ENCODE measurements at regions of chr5 and their contacts with region 1.

Region 1: DNA sequence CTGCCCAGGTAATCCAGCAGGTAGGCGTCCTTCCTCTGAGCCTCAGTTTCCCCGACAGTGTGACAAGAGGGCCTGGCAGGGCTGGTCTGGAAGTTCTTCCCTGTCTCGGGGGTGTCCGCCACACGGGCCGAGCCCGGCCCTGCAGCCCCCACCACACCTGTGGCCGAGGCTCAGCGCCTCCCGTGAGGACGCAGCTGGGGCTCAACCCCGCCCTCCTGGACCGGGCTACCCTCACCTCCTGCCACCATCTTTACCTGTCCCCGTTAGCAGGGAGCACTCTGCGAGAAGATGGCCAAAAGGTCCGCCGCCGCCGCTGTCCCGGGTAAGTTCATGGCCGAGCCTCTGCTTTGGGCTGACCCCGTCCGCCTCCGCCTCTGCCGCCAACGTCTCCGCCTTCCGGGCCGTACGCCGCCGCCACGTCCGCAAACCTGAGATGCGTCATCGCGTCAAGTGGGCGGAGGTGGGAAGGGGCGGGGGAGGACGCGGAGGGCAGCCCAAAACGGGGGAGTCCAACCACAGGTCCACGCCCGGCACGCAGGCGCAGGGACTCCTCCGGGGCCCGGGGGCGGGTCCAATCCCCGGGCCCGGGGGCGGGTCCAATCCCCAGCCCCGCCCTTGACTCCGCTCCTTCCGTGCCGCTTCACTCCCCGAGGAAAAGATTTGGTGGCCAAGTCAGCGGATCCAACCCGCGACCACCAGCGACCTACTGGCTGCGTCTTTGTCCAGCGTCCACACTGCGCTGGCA is at the start of gene LYSMD3:
- DNase-seq: peak; percentile 94 to 97 (median 96)
- ATAC-seq: peak; percentile 96
- H3K4me3 ChIP-seq: peak within 1 kb of the TSS; percentile 89
- H3K4me3 Mint-ChIP-seq: peak within 1 kb of the TSS; percentile 89 to 100 (median 99)
- H3K27ac ChIP-seq: peak within 1 kb of the TSS; percentile 96
- H3K27ac Mint-ChIP-seq: peak within 1 kb of the TSS; percentile 94 to 100 (median 99)
- H3K4me1 ChIP-seq: peaks cover 13 to 17% of the 10 kb centered on the region in 2 donors
- H3K4me1 Mint-ChIP-seq: peaks cover 20 to 42% (median 31%) of the 10 kb centered on the region in 7 donors
- H3K27me3 ChIP-seq: no peaks in the 10 kb centered on the region
- H3K27me3 Mint-ChIP-seq: peaks cover 12 to 24% (median 17%) of the 10 kb centered on the region in 5 donors
- total RNA-seq, gene LYSMD3: 15.8 to 32.0 (median 25.6) TPM

Region 2: DNA sequence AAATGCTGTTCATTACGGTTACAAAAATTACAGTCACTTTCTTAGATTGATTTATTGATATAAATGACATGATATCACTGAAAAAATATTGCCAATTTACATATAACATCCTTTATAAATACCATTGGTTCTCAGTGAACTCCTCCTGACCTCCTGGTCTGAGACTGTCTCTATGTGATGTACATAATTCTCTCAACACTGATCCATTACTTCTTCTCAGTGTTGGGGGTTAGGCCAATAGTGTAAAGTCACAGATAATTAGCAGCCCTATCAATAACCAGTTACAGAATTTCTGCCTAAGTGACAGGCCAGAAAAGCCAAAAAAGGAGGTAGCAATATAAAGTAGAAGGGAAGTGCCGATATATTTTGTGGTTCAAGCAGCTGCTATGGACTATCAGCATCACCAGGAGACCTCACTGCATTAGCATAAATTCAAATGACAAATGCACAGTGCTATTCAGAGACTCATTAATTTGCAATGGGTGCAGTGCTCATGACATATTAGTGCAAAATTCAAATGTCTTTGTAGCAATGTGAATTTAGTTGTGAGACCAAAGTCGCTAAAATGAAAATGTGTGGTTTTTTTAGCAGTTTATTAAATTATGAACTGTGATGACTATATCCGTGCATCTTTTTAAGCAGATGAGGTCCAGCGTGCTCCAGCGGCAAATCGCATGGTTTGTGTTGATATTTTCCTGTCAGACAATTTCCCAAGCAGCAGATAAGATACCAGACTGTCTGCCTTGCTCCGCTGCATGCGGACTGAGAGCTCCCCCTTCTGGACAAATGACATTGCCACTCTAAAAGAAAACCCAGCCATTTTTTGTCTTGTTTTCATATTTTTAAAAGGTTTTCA is 264.4 kb before region 1 on chr5:
- CTCF ChIA-PET with region 1: no interaction called
- POLR2A ChIA-PET with region 1: no interaction called
- intact Hi-C with region 1: loop called in 1 of 2 experiments (anchors 10 kb)
- DNase-seq: peak; percentile 0 to 46 (median 30)
- ATAC-seq: peak; percentile 59
- H3K4me3 ChIP-seq: no peak overlapping the region
- H3K4me3 Mint-ChIP-seq: no peak overlapping the region
- H3K27ac ChIP-seq: no peak overlapping the region
- H3K27ac Mint-ChIP-seq: no peak overlapping the region
- H3K4me1 ChIP-seq: no peaks in the 10 kb centered on the region
- H3K4me1 Mint-ChIP-seq: peaks cover 0 to 3% (median 0%) of the 10 kb centered on the region in 7 donors
- H3K27me3 ChIP-seq: no peaks in the 10 kb centered on the region
- H3K27me3 Mint-ChIP-seq: peaks cover 0 to 4% (median 0%) of the 10 kb centered on the region in 5 donors

Region 3: GRCh38 chr5:90434116-90434714 is 95.2 kb before region 1 on chr5:
- CTCF ChIA-PET with region 1: interaction called, 12 read pairs
- POLR2A ChIA-PET with region 1: interaction called, 6 read pairs
- intact Hi-C with region 1: loop called (anchors 1 kb)
- DNase-seq: peak in 7 of 9 donors; percentile 11 to 45 (median 41)
- ATAC-seq: peak; percentile 69
- H3K4me3 ChIP-seq: no peak overlapping the region
- H3K4me3 Mint-ChIP-seq: no peak overlapping the region
- H3K27ac ChIP-seq: no peak overlapping the region
- H3K27ac Mint-ChIP-seq: no peak overlapping the region
- H3K4me1 ChIP-seq: no peaks in the 10 kb centered on the region
- H3K4me1 Mint-ChIP-seq: no peaks in the 10 kb centered on the region
- H3K27me3 ChIP-seq: no peaks in the 10 kb centered on the region
- H3K27me3 Mint-ChIP-seq: peaks cover 0 to 40% (median 5%) of the 10 kb centered on the region in 5 donors

Region 4: DNA sequence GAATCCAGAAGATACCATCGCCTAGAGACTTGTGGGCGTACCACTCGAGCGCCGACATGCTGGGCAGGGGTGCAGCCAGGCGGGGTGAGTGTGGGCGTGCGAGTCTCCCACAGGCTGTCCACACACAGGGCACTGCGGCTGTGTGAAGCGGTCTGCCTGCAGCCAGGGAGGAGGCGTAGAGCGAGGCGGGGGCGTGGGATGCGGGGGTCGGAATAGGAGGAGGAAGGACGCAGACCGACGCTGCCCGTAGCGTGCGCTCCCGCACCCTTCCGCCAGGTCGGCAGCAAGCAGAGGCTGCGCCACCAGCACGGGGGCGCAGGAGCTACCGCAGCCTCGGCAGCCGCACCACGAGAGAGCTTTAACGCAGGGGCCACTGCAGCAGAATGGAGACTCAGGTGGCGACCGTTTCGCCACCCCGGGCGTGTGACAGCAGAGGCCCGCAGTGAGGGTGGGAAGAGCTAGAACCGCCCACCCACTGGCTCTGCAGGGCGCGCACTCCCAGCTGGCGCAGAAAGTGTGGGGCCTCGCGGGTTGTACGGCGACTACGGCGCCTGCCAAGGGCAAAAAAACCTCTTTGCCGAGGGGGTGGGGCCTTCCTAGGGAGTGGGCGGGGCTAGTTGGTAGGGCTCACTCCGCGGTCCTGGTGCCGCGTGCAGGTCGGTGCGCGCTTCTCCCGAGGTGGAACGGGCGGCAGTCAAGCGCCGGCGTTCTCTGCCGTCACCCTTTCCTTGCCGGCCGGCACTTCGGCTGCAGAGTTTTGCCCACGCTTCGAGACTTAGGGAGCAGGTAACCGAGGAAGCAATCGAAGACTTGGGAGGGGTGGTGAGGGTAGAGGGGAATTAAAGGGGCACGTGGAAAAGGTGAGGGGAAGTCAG is 54.9 kb before region 1 on chr5 and contains the starts of genes MBLAC2 and POLR3G:
- CTCF ChIA-PET with region 1: interaction called, 7 read pairs
- POLR2A ChIA-PET with region 1: interaction called, 28 read pairs
- intact Hi-C with region 1: loop called (anchors 1 kb)
- DNase-seq: peak; percentile 80 to 93 (median 92)
- ATAC-seq: peak; percentile 95
- H3K4me3 ChIP-seq: peak within 1 kb of the TSS; percentile 95
- H3K4me3 Mint-ChIP-seq: peak within 1 kb of the TSS; percentile 90 to 99 (median 98)
- H3K27ac ChIP-seq: peak within 1 kb of the TSS; percentile 76
- H3K27ac Mint-ChIP-seq: peak within 1 kb of the TSS; percentile 86 to 98 (median 94)
- H3K4me1 ChIP-seq: peaks cover 15 to 16% of the 10 kb centered on the region in 2 donors
- H3K4me1 Mint-ChIP-seq: peaks cover 18 to 51% (median 43%) of the 10 kb centered on the region in 7 donors
- H3K27me3 ChIP-seq: no peaks in the 10 kb centered on the region
- H3K27me3 Mint-ChIP-seq: no peaks in the 10 kb centered on the region
- total RNA-seq, gene MBLAC2: 5.2 to 17.6 (median 7.1) TPM
- total RNA-seq, gene POLR3G: 0.51 to 3.0 (median 1.5) TPM

Region 5: GRCh38 chr5:90495146-90495545 is 34.2 kb before region 1 on chr5:
- CTCF ChIA-PET with region 1: no interaction called
- POLR2A ChIA-PET with region 1: no interaction called
- intact Hi-C with region 1: no loop called
- DNase-seq: no peak
- ATAC-seq: no peak
- H3K4me3 ChIP-seq: no peak overlapping the region
- H3K4me3 Mint-ChIP-seq: no peak overlapping the region
- H3K27ac ChIP-seq: no peak overlapping the region
- H3K27ac Mint-ChIP-seq: no peak overlapping the region
- H3K4me1 ChIP-seq: no peaks in the 10 kb centered on the region
- H3K4me1 Mint-ChIP-seq: peaks cover 0 to 2% (median 0%) of the 10 kb centered on the region in 7 donors
- H3K27me3 ChIP-seq: no peaks in the 10 kb centered on the region
- H3K27me3 Mint-ChIP-seq: no peaks in the 10 kb centered on the region

Region 6: DNA sequence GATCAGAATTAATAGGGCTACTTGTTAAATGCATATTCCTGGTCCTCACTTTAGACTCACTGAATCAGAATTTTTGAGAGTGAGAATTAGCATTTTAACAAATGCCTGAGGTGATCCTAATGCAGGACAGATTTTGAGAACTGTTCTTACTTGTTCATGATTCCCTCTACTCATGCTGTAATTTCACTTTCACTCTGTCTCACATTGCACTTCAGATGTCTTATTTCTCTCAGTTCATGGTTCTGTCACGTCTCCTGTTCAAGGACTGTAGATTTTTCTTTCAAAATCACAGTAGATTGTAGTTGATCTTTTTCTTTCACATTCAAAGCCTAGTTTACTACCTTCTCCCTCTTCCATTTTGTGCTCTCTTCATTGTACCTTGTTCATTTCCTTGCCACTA is 83.6 kb after region 1 on chr5:
- CTCF ChIA-PET with region 1: no interaction called
- POLR2A ChIA-PET with region 1: no interaction called
- intact Hi-C with region 1: no loop called
- DNase-seq: no peak
- ATAC-seq: no peak
- H3K4me3 ChIP-seq: no peak overlapping the region
- H3K4me3 Mint-ChIP-seq: no peak overlapping the region
- H3K27ac ChIP-seq: no peak overlapping the region
- H3K27ac Mint-ChIP-seq: no peak overlapping the region
- H3K4me1 ChIP-seq: no peaks in the 10 kb centered on the region
- H3K4me1 Mint-ChIP-seq: peaks cover 0 to 6% (median 0%) of the 10 kb centered on the region in 7 donors
- H3K27me3 ChIP-seq: no peaks in the 10 kb centered on the region
- H3K27me3 Mint-ChIP-seq: peaks cover 3 to 33% (median 19%) of the 10 kb centered on the region in 5 donors

Region 7: GRCh38 chr5:91280362-91281269 is 751.2 kb after region 1 on chr5:
- CTCF ChIA-PET with region 1: no interaction called
- POLR2A ChIA-PET with region 1: no interaction called
- intact Hi-C with region 1: loop called in 1 of 2 experiments (anchors 5 kb)
- DNase-seq: peak; percentile 45 to 89 (median 63)
- ATAC-seq: peak; percentile 90
- H3K4me3 ChIP-seq: peak overlapping the region; percentile 76
- H3K4me3 Mint-ChIP-seq: peak overlapping the region; percentile 88 to 99 (median 92)
- H3K27ac ChIP-seq: peak overlapping the region; percentile 41
- H3K27ac Mint-ChIP-seq: peak overlapping the region; percentile 74 to 94 (median 91)
- H3K4me1 ChIP-seq: peaks cover 0 to 4% of the 10 kb centered on the region in 2 donors
- H3K4me1 Mint-ChIP-seq: peaks cover 13 to 34% (median 23%) of the 10 kb centered on the region in 7 donors
- H3K27me3 ChIP-seq: no peaks in the 10 kb centered on the region
- H3K27me3 Mint-ChIP-seq: peaks cover 0 to 13% (median 0%) of the 10 kb centered on the region in 5 donors

Measured in naive thymus-derived CD4-positive, alpha-beta T cell (primary cell).